CD8-positive, alpha-beta T cell (primary cell): ENCODE measurements at regions of chr16 and their contacts with region 1.

Region 1: DNA sequence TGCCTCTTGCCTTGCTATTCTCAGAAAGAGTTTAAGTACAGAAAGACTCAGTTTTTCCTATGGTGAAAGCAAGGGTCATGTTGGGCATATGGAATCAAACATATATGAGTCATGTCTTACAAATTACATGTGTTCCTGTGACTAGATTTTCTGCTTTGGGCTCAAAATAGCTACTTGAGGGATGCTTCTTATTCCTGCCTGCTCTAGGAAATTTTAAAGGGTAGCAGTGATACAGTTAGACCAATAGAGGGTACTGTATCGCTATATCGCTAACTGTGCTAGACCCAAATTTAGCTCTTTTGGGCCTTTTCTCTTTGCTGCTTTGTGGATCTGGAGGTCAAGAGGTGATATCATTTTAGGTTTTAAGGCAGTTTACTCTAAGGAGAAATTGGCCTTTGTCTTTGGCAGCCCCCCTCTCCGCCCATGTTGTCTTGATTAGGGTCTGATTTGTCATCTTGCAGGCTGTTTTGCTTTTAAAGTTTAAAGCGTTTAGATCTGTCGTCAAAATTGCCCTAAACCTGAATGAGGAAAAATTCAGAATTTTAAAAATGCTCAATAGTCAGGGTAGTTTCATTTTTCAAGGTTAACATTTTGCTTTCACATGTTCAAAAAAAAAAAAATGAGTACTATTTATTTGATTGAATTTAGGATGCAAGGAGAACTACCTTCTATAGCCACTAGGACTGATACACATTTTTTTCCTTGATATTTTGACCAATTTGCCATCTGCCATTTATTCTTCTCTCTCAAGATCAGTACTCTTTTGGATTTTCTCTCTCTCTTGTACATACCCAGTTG is 8.8 kb downstream of the NFATC3 start:
- DNase-seq: peak in 2 of 9 experiments; percentile 54 to 69
- ATAC-seq: peak; percentile 88
- H3K4me3 ChIP-seq: no peak overlapping the region
- H3K4me3 Mint-ChIP-seq: peak overlapping the region; percentile 57
- H3K27ac ChIP-seq: peak overlapping the region in 1 of 2 experiments; percentile 38
- H3K27ac Mint-ChIP-seq: peak overlapping the region; percentile 87
- H3K4me1 ChIP-seq: peaks cover 89% of the 10 kb centered on the region
- H3K4me1 Mint-ChIP-seq: peaks cover 83% of the 10 kb centered on the region
- H3K27me3 ChIP-seq: no peaks in the 10 kb centered on the region
- H3K27me3 Mint-ChIP-seq: no peaks in the 10 kb centered on the region
- CTCF ChIP-seq: peak; percentile 69

Region 2: DNA sequence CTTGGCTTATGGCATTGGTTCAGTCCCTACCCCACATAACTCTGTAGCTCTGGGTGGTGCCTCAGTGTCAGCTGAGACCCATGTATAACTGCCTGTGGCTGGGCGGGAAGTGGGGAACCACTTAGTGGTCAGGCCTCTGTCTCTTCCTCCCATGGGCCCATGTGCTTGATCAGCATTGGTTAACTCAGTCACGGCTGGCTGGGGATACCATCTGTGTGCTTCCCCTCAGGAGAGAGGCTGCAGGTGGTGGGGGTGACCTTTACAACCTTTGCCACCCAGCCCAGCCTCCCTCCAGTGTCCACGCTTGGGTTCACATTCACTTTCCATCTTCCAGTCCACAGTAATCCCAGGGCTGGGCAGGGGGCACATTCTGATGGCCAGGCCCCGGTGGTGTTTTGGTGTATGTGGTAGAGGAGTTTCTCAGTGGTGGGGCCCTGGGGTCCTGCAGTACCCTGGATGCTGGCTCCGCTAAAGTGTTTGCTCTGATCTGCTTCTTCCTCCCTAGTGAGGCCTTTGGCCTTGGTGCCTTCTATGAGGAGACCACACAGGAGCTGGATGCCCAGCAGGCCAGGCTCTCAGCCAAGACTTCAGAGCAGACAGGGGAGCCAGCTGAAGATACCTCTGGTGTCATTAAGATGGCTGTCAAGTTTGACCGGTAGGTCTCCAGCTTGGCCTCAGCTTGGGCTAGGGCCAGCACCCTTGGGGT is 19.0 kb before region 1 on chr16:
- CTCF ChIA-PET with region 1: interaction called, 21 read pairs
- POLR2A ChIA-PET with region 1: interaction called, 11 read pairs
- intact Hi-C with region 1: no loop called
- DNase-seq: peak in 8 of 9 experiments; percentile 58 to 85 (median 77)
- ATAC-seq: peak; percentile 69
- H3K4me3 ChIP-seq: peak overlapping the region; percentile 1 to 19
- H3K4me3 Mint-ChIP-seq: peak overlapping the region; percentile 76
- H3K27ac ChIP-seq: peak overlapping the region in 1 of 2 experiments; percentile 64
- H3K27ac Mint-ChIP-seq: peak overlapping the region; percentile 92
- H3K4me1 ChIP-seq: peaks cover 92% of the 10 kb centered on the region
- H3K4me1 Mint-ChIP-seq: peaks cover 87% of the 10 kb centered on the region
- H3K27me3 ChIP-seq: no peaks in the 10 kb centered on the region
- H3K27me3 Mint-ChIP-seq: no peaks in the 10 kb centered on the region
- CTCF ChIP-seq: no peak

Region 3: DNA sequence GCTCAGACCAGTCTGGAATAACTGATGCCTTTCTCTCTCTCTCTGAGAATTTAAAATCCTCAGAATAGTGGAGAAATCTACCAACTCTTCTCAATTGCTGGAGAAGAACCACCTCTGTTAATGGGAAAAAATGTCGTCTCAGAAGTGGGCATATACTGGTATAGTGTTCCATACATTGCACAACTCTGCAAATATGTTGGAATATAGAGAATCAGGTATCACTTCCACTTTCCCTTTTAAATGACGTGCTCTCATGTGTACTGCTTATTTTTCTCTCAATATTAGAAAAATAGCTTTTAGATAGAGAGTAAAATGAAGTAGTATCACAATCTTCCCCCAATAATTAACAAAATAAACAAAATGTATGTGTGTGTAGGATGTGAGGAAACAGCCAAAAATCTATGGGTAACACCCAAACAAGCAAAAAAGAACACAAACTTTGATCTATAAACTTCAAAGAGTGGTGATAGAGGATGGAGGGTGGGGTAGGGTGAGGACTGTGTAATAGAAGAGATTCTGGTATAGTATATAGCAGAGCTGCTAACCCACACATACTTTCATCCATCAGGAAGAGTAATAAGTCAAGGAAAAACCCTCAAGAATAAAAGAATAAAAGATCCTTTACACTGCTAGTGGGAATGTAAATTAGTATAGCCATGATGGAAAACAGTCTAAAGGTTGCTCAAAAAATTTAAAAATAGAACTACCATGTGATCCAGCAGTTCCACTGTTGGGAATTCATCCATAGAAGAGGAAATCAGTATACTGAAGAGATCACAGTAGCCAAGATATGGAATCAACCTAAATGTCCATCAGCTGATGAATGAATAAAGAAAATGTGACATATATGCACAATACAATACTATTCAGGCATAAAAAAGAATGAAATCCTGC is 38.0 kb after region 1 on chr16:
- CTCF ChIA-PET with region 1: interaction called, 3 read pairs
- POLR2A ChIA-PET with region 1: no interaction called
- intact Hi-C with region 1: loop called in 1 of 2 experiments (anchors 5 kb)
- DNase-seq: peak in 2 of 9 experiments; percentile 24 to 63
- ATAC-seq: peak; percentile 97
- H3K4me3 ChIP-seq: no peak overlapping the region
- H3K4me3 Mint-ChIP-seq: peak overlapping the region; percentile 69
- H3K27ac ChIP-seq: peak overlapping the region; percentile 35 to 65
- H3K27ac Mint-ChIP-seq: peak overlapping the region; percentile 92
- H3K4me1 ChIP-seq: peaks cover 41% of the 10 kb centered on the region
- H3K4me1 Mint-ChIP-seq: peaks cover 64% of the 10 kb centered on the region
- H3K27me3 ChIP-seq: no peaks in the 10 kb centered on the region
- H3K27me3 Mint-ChIP-seq: no peaks in the 10 kb centered on the region
- CTCF ChIP-seq: no peak

Region 4: DNA sequence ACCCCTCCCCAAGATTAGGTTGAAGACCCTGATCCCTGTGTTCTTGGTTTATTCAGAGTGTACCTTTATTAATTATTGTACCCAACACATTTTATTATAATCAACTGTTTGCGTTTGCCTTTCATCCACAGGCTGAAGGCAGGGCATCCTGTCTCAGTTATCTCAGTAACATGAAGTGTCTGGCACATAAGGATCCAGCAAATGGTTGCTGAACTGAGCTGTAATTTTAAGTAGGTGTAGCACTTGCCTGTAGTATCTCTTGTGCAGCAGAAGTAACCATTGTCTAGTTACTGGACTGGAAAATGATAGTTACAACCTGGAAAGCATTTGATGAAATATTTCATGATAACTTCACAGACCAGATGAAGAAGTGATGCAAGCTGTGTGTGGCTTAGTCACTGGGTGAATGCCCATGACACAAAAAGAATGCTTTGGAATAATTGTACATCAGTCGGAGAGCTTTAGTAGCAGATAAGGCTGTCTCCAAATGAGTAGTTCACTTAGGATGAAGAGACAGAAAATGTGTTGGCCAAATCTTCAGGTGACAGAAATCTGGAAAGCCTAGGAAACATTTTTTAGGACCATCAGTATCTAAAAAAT is 85.3 kb after region 1 on chr16:
- CTCF ChIA-PET with region 1: interaction called, 10 read pairs
- POLR2A ChIA-PET with region 1: interaction called, 3 read pairs
- intact Hi-C with region 1: no loop called
- DNase-seq: no peak
- ATAC-seq: no peak
- H3K4me3 ChIP-seq: no peak overlapping the region
- H3K4me3 Mint-ChIP-seq: no peak overlapping the region
- H3K27ac ChIP-seq: no peak overlapping the region
- H3K27ac Mint-ChIP-seq: peak overlapping the region; percentile 73
- H3K4me1 ChIP-seq: no peaks in the 10 kb centered on the region
- H3K4me1 Mint-ChIP-seq: peaks cover 11% of the 10 kb centered on the region
- H3K27me3 ChIP-seq: no peaks in the 10 kb centered on the region
- H3K27me3 Mint-ChIP-seq: no peaks in the 10 kb centered on the region
- CTCF ChIP-seq: no peak

Region 5: GRCh38 chr16:68310761-68311511 is 216.9 kb after region 1 on chr16 and contains the starts of genes PRMT7 and SLC7A6OS:
- CTCF ChIA-PET with region 1: no interaction called
- POLR2A ChIA-PET with region 1: no interaction called
- intact Hi-C with region 1: no loop called
- DNase-seq: peak; percentile 77 to 96 (median 92)
- ATAC-seq: peak; percentile 97
- H3K4me3 ChIP-seq: peak within 1 kb of the TSS; percentile 84 to 92
- H3K4me3 Mint-ChIP-seq: peak within 1 kb of the TSS; percentile 97
- H3K27ac ChIP-seq: peak within 1 kb of the TSS; percentile 70 to 81
- H3K27ac Mint-ChIP-seq: peak within 1 kb of the TSS; percentile 98
- H3K4me1 ChIP-seq: peaks cover 46% of the 10 kb centered on the region
- H3K4me1 Mint-ChIP-seq: peaks cover 62% of the 10 kb centered on the region
- H3K27me3 ChIP-seq: no peaks in the 10 kb centered on the region
- H3K27me3 Mint-ChIP-seq: no peaks in the 10 kb centered on the region
- CTCF ChIP-seq: peak; percentile 8
- total RNA-seq, gene PRMT7: 53.8 to 58.7 TPM
- total RNA-seq, gene SLC7A6OS: 39.4 to 44.2 TPM